ENCODE measurements at regions of chr10 and their contacts with region 1.

Region 1: DNA sequence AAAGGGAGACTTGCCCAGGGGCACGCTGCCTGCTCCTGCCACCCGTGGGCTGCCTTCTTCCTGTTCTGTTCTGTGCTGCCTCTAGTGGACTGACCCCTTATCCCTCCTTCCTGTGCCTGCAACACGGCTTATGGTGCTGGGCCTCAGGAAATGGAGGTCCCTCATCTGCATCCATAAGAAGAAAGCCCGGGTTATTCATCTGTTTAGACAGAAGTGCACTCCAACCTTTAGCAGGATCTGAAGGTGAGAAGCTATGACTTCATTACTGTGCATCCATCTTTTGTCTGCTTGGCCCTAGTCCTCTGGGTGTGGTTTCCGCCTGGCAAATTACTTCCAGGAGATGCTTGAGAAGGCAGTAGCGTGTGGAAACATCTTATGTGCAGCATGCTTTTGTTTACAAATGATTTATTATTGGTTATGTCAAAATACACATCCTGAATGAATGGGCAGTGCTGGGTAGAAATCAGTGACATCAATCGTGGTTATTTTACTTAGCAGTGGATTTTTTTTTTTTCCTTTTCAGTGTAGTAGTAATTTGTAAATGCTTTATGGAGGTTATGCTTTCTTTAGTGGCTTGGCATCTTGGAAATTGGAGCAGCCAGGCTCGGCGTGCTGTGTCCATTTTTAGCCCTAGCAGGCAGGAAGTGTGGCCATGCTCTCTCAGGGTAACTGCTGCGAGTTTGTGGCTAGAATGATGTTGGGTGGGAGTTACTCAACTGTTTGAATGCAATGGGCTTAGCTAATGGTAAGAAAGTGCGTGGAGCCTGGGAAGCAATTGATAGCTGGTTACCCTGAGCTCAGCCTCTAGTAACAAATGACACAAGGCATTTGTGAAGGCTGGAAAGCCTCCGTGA is 12.7 kb downstream of the PTPRE start:
- DNase-seq: peak in 1 of 2 donors; percentile 64
- ATAC-seq: no peak
- H3K4me3 ChIP-seq: no peak overlapping the region
- H3K27ac ChIP-seq: peak overlapping the region in 1 of 2 donors; percentile 68
- H3K4me1 ChIP-seq: peaks cover 0 to 5% of the 10 kb centered on the region in 2 donors
- H3K27me3 ChIP-seq: no peaks in the 10 kb centered on the region

Region 2: GRCh38 chr10:127863231-127863825 is 56.3 kb before region 1 on chr10:
- intact Hi-C with region 1: no loop called
- DNase-seq: no peak
- ATAC-seq: no peak
- H3K4me3 ChIP-seq: no peak overlapping the region
- H3K27ac ChIP-seq: no peak overlapping the region
- H3K4me1 ChIP-seq: no peaks in the 10 kb centered on the region
- H3K27me3 ChIP-seq: peaks cover 0 to 2% of the 10 kb centered on the region in 2 donors

Region 3: DNA sequence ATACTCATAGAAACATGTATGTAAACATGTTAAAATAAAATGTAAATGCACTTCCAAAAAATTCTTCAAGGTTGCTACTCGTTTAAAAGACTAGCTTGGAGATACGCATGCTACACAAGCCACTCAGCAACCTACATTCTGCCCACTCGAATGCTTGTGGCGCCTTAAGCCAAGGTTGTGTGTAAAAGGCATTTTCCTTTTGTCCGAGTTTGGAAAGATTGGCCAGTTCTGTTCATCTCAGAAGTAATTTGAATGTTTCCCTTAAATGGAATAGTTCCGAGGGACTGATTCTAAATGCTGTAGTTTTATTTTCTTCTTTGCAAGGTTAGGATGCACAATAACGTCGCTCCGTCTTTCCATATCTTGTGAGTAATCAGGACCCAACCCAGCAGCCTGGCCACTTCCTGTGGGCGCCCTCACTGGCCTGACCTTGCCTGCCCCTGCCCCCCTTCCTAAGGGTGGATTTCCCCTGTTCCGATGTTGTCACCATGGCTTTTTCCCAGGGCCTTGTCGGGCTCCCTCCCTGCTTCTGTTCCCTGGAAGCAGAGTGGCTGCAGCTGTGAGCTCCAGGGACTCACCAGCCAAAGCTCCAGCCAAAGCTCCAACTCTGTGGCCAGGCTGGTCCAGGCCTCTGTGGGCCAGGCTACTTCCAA is 57.8 kb after region 1 on chr10:
- intact Hi-C with region 1: loop called in 1 of 2 experiments (anchors 5 kb)
- DNase-seq: peak; percentile 91 to 93
- ATAC-seq: peak; percentile 91
- H3K4me3 ChIP-seq: no peak overlapping the region
- H3K27ac ChIP-seq: peak overlapping the region; percentile 23 to 55
- H3K4me1 ChIP-seq: no peaks in the 10 kb centered on the region
- H3K27me3 ChIP-seq: no peaks in the 10 kb centered on the region

Region 4: DNA sequence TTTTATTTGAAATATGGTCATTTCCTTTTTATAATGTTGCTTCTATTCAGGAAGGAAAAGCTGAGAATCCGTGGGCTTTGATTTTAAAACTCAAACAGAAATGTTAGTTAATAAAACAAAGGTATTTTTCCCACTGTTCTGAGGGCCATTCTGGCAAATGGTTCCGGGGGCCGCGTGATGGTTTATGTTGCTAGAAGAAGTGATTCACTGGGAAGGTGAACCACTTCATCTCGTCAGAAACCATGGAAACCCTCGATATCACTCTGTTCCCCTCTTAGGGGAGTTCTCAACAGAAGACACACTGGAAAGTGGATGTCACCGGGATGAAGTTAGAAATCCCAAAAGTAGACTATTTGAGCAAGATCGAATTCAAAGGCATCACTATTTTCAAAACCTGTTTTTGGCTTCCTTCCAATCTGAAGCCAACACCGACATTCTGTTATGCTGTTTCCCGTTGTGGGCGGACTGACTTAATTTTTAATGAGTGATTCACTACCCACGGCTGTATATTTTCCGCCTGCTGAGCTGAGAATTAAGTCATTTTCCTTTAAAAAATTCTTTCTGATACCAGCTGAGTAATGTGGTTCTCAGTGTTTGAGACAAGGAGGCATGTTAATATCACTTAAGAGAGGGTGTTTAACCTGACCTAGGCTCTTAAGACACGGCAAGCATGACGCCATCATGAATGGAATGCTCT is 71.3 kb after region 1 on chr10:
- intact Hi-C with region 1: loop called in 1 of 2 experiments (anchors 5 kb)
- DNase-seq: no peak
- ATAC-seq: peak; percentile 72
- H3K4me3 ChIP-seq: no peak overlapping the region
- H3K27ac ChIP-seq: peak overlapping the region in 1 of 2 donors; percentile 69
- H3K4me1 ChIP-seq: peaks cover 0 to 3% of the 10 kb centered on the region in 2 donors
- H3K27me3 ChIP-seq: no peaks in the 10 kb centered on the region

Region 5: DNA sequence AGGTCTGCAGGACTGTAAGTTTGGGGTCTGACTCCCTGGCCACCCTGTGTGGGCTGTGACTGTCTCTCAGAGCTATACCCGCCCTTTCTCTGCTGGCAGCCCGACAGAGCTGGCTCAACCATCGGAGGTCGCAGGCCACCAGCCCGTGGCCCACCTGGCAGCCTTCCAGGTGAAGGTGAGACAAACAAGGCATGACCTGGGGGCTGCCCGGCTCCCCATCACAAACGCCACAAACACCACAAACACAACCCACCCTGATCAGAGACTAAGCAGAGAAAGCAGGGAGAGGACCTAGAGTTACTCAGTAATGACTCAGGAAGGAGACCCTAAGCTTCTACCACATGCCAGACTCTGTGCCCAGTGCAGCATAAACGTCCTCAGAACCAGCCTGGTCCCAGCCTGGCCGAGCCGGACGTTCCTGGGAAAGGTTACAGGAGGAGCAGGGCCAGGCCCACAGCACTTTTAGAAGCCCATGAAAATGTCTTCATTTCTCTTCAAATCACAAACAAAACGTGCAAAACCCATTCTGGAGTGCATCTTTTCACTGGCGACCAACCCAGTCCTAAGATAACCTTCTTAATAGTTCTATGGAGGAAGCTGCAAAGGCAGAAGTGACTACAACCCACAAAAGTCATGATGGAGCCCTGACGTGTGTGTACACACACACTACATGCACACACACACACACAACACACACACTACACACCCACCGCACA is 139.8 kb after region 1 on chr10:
- intact Hi-C with region 1: loop called in 1 of 2 experiments (anchors 5 kb)
- DNase-seq: peak; percentile 51 to 78
- ATAC-seq: no peak
- H3K4me3 ChIP-seq: no peak overlapping the region
- H3K27ac ChIP-seq: peak overlapping the region in 1 of 2 donors; percentile 11
- H3K4me1 ChIP-seq: peaks cover 3 to 5% of the 10 kb centered on the region in 2 donors
- H3K27me3 ChIP-seq: no peaks in the 10 kb centered on the region